ENCODE measurements at regions of chr11 and their contacts with region 1.

Region 1: GRCh38 chr11:29564486-29564885 is 452.3 kb downstream of the KCNA4 start:
- DNase-seq: no peak
- ATAC-seq: no peak
- H3K4me3 ChIP-seq: no peak overlapping the region
- H3K4me3 Mint-ChIP-seq: no peak overlapping the region
- H3K27ac ChIP-seq: no peak overlapping the region
- H3K27ac Mint-ChIP-seq: no peak overlapping the region
- H3K4me1 ChIP-seq: no peaks in the 10 kb centered on the region
- H3K4me1 Mint-ChIP-seq: no peaks in the 10 kb centered on the region
- H3K27me3 ChIP-seq: no peaks in the 10 kb centered on the region
- H3K27me3 Mint-ChIP-seq: no peaks in the 10 kb centered on the region
- CTCF ChIP-seq: no peak

Region 2: GRCh38 chr11:28799316-28799715 is 765.2 kb before region 1 on chr11:
- CTCF ChIA-PET with region 1: no interaction called
- POLR2A ChIA-PET with region 1: no interaction called
- intact Hi-C with region 1: loop called in 1 of 2 experiments (anchors 5 kb)
- DNase-seq: no peak
- ATAC-seq: no peak
- H3K4me3 ChIP-seq: no peak overlapping the region
- H3K4me3 Mint-ChIP-seq: no peak overlapping the region
- H3K27ac ChIP-seq: no peak overlapping the region
- H3K27ac Mint-ChIP-seq: no peak overlapping the region
- H3K4me1 ChIP-seq: no peaks in the 10 kb centered on the region
- H3K4me1 Mint-ChIP-seq: no peaks in the 10 kb centered on the region
- H3K27me3 ChIP-seq: no peaks in the 10 kb centered on the region
- H3K27me3 Mint-ChIP-seq: no peaks in the 10 kb centered on the region
- CTCF ChIP-seq: no peak

Region 3: GRCh38 chr11:29507376-29507775 is 57.1 kb before region 1 on chr11:
- CTCF ChIA-PET with region 1: no interaction called
- POLR2A ChIA-PET with region 1: no interaction called
- intact Hi-C with region 1: no loop called
- DNase-seq: no peak
- ATAC-seq: no peak
- H3K4me3 ChIP-seq: no peak overlapping the region
- H3K4me3 Mint-ChIP-seq: no peak overlapping the region
- H3K27ac ChIP-seq: no peak overlapping the region
- H3K27ac Mint-ChIP-seq: no peak overlapping the region
- H3K4me1 ChIP-seq: no peaks in the 10 kb centered on the region
- H3K4me1 Mint-ChIP-seq: no peaks in the 10 kb centered on the region
- H3K27me3 ChIP-seq: no peaks in the 10 kb centered on the region
- H3K27me3 Mint-ChIP-seq: no peaks in the 10 kb centered on the region
- CTCF ChIP-seq: no peak

Measured in CD4-positive, alpha-beta T cell (primary cell).